Mammary epithelial cell (primary cell): ENCODE measurements at regions of chr6 and their contacts with region 1.

Region 1: GRCh38 chr6:87944541-87944954 is 103.1 kb upstream of the SPACA1 start:
- DNase-seq: peak; percentile 93
- H3K4me3 ChIP-seq: no peak overlapping the region
- H3K27ac ChIP-seq: peak overlapping the region; percentile 54
- H3K4me1 ChIP-seq: peaks cover 25% of the 10 kb centered on the region
- H3K27me3 ChIP-seq: peaks cover 3% of the 10 kb centered on the region
- CTCF ChIP-seq: peak in 1 of 2 donors; percentile 49

Region 2: DNA sequence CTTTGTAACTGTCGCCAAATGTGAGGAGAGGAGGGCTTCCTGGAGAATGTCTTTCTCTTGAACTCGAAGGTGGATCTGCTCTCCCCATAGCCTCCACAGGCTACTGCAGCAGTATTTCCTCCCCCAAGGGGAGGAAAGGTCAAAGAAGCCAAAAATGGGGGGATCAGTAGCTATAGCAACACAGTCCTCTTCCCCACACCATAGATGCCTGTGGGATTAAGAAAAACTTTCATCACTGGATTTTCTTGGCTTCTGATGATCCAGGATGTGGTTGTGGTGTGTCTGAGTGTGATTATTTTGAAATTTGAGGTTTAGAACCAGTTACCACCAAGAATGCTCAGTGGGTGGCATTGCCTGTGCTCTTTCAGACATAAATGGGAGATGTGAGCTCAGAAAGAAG is 37.0 kb before region 1 on chr6:
- CTCF ChIA-PET with region 1: no interaction called
- dilution Hi-C with region 1: no loop called
- in situ Hi-C with region 1: no loop called
- intact Hi-C with region 1: loop called (anchors 2 kb)
- DNase-seq: peak; percentile 78
- H3K4me3 ChIP-seq: no peak overlapping the region
- H3K27ac ChIP-seq: no peak overlapping the region
- H3K4me1 ChIP-seq: peaks cover 52% of the 10 kb centered on the region
- H3K27me3 ChIP-seq: peaks cover 18% of the 10 kb centered on the region
- CTCF ChIP-seq: no peak